ENCODE measurements at regions of chr22 and their contacts with region 1.

Region 1: GRCh38 chr22:20027966-20028854 is 7.3 kb downstream of the TANGO2 start:
- DNase-seq: peak; percentile 44
- H3K4me3 Mint-ChIP-seq: no peak overlapping the region
- H3K27ac Mint-ChIP-seq: no peak overlapping the region
- H3K4me1 Mint-ChIP-seq: no peaks in the 10 kb centered on the region
- H3K27me3 Mint-ChIP-seq: no peaks in the 10 kb centered on the region
- CTCF ChIP-seq: peak; percentile 35

Region 2: GRCh38 chr22:19495562-19496323 is 532.5 kb before region 1 on chr22:
- CTCF ChIA-PET with region 1: no interaction called
- POLR2A ChIA-PET with region 1: no interaction called
- intact Hi-C with region 1: no loop called
- DNase-seq: peak; percentile 32
- H3K4me3 Mint-ChIP-seq: no peak overlapping the region
- H3K27ac Mint-ChIP-seq: no peak overlapping the region
- H3K4me1 Mint-ChIP-seq: peaks cover 6% of the 10 kb centered on the region
- H3K27me3 Mint-ChIP-seq: no peaks in the 10 kb centered on the region
- CTCF ChIP-seq: peak; percentile 15

Region 3: DNA sequence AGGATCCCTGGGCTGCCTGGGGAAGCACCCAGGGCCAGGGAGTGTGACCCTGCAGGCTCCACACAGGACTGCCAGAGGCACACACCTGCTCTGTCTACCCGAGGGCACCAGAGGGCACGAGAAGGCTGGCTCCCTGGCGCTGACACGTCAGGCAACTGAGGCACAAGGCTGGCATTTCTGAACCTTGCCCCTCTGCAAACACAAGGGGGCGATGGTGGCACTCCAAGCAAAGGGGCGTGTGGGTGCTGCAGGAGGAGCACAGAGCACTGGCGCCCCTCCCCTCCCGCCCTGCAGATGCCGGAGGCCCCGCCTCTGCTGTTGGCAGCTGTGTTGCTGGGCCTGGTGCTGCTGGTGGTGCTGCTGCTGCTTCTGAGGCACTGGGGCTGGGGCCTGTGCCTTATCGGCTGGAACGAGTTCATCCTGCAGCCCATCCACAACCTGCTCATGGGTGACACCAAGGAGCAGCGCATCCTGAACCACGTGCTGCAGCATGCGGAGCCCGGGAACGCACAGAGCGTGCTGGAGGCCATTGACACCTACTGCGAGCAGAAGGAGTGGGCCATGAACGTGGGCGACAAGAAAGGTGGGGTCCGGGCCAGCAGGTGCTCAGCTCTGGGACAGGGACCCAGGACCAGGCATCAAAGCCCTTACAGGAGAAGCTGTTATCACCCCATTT is 65.8 kb before region 1 on chr22:
- CTCF ChIA-PET with region 1: no interaction called
- POLR2A ChIA-PET with region 1: no interaction called
- intact Hi-C with region 1: loop called (anchors 2 kb)
- DNase-seq: peak; percentile 85
- H3K4me3 Mint-ChIP-seq: no peak overlapping the region
- H3K27ac Mint-ChIP-seq: no peak overlapping the region
- H3K4me1 Mint-ChIP-seq: peaks cover 5% of the 10 kb centered on the region
- H3K27me3 Mint-ChIP-seq: no peaks in the 10 kb centered on the region
- CTCF ChIP-seq: peak; percentile 77

Region 4: DNA sequence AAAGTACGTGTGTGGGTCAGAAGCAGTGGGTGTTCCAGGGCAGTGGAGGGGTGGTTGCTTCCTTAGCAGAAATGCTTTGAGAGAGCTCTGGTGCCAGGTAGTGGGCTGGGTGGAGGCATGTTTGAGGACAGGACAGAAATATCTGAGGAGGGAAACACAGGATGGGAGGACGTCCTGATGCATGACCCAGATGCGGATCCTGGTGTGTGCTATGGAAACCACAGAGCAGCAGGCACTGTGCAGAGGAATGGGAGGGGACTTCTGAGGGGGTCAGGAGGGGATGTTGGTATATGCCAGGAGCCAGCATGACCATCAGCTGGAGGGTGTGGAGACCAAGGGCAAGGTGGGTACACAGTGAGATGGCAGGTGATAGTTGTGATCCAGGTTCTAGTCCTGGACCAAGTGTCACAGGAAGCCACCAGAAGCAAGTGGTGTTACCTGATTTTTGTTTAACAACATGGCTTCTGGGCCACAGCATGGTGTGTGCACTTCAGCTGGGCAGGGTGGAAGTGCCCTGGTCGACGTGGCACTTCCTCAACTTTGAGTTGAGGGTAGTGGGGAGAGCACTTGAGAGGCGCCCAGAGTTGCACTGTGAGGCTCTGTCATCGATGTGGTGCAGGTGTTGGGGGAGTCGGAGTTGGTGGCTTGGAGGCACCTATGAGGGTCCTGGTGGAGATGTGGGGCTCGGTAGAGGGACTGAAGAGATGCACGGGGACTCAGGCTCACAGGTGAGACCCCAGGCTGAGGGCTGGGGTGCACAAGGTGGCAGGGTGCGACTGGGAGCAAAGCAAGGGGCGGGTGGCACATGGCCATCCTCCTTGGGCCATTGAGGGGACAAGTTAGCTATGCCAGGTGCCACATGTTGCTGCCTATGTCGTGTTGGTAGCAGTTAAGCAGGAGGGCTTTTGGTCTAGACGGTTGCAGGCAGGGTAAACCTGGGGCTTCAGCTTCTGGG is 59.4 kb after region 1 on chr22:
- CTCF ChIA-PET with region 1: no interaction called
- POLR2A ChIA-PET with region 1: no interaction called
- intact Hi-C with region 1: no loop called
- DNase-seq: no peak
- H3K4me3 Mint-ChIP-seq: no peak overlapping the region
- H3K27ac Mint-ChIP-seq: no peak overlapping the region
- H3K4me1 Mint-ChIP-seq: peaks cover 31% of the 10 kb centered on the region
- H3K27me3 Mint-ChIP-seq: no peaks in the 10 kb centered on the region
- CTCF ChIP-seq: no peak

Measured in MCF 10A (cell line).